GM12878 (cell line): ENCODE measurements at regions of chr6 and their contacts with region 1.

Region 1: DNA sequence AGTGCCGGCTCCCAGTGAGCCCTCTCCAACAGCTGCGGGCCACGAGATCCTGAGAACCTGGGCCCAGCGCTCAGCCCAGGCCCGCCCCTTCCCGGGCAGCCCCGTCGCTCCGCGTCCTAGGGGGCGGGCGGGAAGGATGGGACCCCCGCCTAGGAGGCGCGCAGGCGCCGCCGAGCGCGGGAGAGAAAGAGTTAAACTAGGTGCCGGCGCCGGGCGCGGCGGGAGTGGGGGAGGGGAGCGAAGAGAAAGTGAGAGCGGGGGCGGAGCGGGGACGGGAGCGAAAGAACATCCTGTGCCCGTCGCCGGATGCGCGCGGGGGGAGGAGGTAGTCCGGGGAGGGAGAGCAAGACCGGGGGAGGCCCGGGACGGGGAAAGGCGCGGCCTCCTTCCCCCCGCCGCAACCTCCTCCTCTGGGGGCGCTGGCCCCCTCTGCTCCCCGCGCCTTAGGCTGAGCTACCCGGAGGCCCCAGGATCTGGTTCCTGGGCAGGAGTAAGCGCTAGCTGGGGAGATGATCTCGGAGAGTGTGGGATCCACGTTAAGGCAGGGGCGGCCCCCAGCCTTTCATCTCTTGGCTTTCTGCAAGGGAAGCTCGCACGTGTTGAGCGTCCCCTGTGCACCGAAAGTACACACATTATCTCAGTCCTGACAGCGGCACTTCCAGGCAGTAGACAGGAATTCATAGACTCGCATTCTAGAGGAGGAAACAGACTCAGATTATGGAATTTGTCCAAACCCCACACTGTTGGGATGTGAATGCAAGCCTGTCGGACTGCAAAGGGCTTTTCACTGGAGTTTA is 4.9 kb upstream of the ARMC12 start:
- DNase-seq: peak; percentile 67
- ATAC-seq: peak; percentile 70
- H3K4me3 ChIP-seq: peak overlapping the region; percentile 86
- H3K27ac ChIP-seq: peak overlapping the region; percentile 89
- H3K4me1 ChIP-seq: peaks cover 44% of the 10 kb centered on the region
- H3K27me3 ChIP-seq: no peaks in the 10 kb centered on the region
- CTCF ChIP-seq: peak in 2 of 3 experiments; percentile 1 to 22; a peak in 1 of 6 replicates
- EP300 ChIP-seq: peak; percentile 33 to 68; a peak in 1 of 4 replicates
- POLR2A ChIP-seq: peak; percentile 70
- RAD21 ChIP-seq: no peak

Region 2: DNA sequence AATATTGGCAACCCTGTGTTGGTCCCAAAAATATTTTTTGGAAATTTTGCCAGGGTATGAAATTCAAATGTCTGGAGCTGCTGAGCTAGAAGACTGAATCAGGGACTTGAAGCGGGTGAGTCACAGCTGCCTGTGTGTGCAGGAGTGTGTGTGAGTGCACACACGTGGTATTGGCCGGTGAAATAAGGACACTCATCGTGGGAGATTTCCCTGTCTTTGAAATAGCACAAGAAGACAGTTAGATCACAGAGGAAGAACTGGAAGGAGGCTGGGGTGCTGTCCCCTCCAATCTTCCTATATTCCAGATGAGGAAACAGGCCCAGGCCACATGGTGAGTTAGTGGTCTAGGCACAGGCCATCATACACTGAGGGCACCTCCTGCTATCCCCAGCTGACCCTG is 1804.3 kb before region 1 on chr6:
- CTCF ChIA-PET with region 1: no interaction called
- POLR2A ChIA-PET with region 1: no interaction called
- RAD21 ChIA-PET with region 1: no interaction called
- SMC1A ChIA-PET with region 1: no interaction called
- in situ Hi-C with region 1: no loop called
- intact Hi-C with region 1: no loop called
- DNase-seq: no peak
- ATAC-seq: no peak
- H3K4me3 ChIP-seq: no peak overlapping the region
- H3K27ac ChIP-seq: no peak overlapping the region
- H3K4me1 ChIP-seq: no peaks in the 10 kb centered on the region
- H3K27me3 ChIP-seq: peaks cover 0 to 2% of the 10 kb centered on the region in 2 experiments; a peak in 2 of 4 replicates
- CTCF ChIP-seq: no peak
- EP300 ChIP-seq: no peak
- POLR2A ChIP-seq: no peak
- RAD21 ChIP-seq: no peak

Region 3: DNA sequence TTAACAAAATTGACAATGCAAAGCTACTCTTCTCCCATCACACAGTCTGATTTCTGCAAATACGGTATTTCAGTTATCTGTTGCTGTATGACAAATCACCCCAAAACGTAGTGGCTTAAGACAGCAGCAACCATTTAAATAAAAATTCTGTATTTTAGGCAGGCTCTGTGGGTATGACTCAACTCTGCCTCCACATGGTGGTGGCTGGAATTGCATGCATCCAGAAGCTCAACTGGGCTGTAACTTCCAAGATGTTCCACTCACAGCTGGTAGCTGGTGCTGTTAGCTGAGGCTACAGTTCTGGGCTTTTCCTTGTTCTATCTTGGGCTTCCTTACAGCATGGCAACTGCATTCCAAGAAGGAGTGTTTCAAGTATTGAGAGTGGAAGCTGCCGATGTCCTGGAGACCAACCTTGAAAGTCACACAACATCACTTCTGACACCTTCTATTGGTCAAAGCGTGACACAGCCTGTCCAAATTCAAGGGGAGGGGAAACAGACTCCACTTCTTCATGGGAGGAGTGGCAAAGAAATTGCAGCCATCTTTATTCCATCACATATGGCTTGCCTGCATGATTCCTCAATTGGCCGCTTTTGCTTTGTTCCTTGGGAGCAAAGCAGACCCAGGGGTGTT is 179.5 kb before region 1 on chr6:
- CTCF ChIA-PET with region 1: interaction called, 11 read pairs
- POLR2A ChIA-PET with region 1: no interaction called
- RAD21 ChIA-PET with region 1: interaction called, 3 read pairs
- SMC1A ChIA-PET with region 1: interaction called, 4 read pairs
- in situ Hi-C with region 1: no loop called
- intact Hi-C with region 1: no loop called
- DNase-seq: peak; percentile 15
- ATAC-seq: peak; percentile 43; the same call in 2 of the 3 replicates
- H3K4me3 ChIP-seq: no peak overlapping the region
- H3K27ac ChIP-seq: no peak overlapping the region
- H3K4me1 ChIP-seq: no peaks in the 10 kb centered on the region
- H3K27me3 ChIP-seq: no peaks in the 10 kb centered on the region
- CTCF ChIP-seq: peak; percentile 40 to 90 (median 83)
- EP300 ChIP-seq: no peak
- POLR2A ChIP-seq: no peak
- RAD21 ChIP-seq: peak; percentile 39; the same call in 1 of the 2 replicates

Region 4: DNA sequence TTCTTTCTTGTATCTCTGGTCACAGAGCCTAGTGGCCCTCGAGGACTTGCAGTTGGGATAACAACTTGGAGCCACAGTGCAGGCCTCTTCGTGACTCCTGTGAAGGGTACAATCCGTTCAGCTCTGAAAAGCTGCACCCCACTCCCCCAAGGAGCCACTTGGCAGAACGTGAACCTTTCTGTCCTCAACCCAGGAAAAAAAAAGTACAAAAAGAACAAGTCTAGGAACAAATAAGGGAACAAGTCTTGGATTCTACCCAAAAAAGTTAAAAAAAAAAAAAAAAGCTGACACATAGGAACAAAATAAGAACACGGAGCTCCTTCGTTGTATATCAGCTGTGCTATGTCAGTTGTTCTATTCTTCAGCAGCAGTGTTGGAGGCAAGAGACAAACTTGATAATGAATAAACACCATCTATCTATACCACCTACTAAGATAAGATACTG is 141.3 kb before region 1 on chr6:
- CTCF ChIA-PET with region 1: interaction called, 374 read pairs
- POLR2A ChIA-PET with region 1: interaction called, 8 read pairs
- RAD21 ChIA-PET with region 1: interaction called, 91 read pairs
- SMC1A ChIA-PET with region 1: interaction called, 149 read pairs
- in situ Hi-C with region 1: no loop called
- intact Hi-C with region 1: no loop called
- DNase-seq: no peak
- ATAC-seq: no peak
- H3K4me3 ChIP-seq: no peak overlapping the region
- H3K27ac ChIP-seq: no peak overlapping the region
- H3K4me1 ChIP-seq: no peaks in the 10 kb centered on the region
- H3K27me3 ChIP-seq: no peaks in the 10 kb centered on the region
- CTCF ChIP-seq: no peak
- EP300 ChIP-seq: no peak
- POLR2A ChIP-seq: no peak
- RAD21 ChIP-seq: no peak

Region 5: GRCh38 chr6:35629876-35630378 is 102.0 kb before region 1 on chr6:
- CTCF ChIA-PET with region 1: interaction called, 16 read pairs
- POLR2A ChIA-PET with region 1: no interaction called
- RAD21 ChIA-PET with region 1: interaction called, 6 read pairs
- SMC1A ChIA-PET with region 1: interaction called, 5 read pairs
- in situ Hi-C with region 1: no loop called
- intact Hi-C with region 1: no loop called
- DNase-seq: no peak
- ATAC-seq: no peak
- H3K4me3 ChIP-seq: no peak overlapping the region
- H3K27ac ChIP-seq: no peak overlapping the region
- H3K4me1 ChIP-seq: no peaks in the 10 kb centered on the region
- H3K27me3 ChIP-seq: no peaks in the 10 kb centered on the region
- CTCF ChIP-seq: no peak
- EP300 ChIP-seq: no peak
- POLR2A ChIP-seq: no peak
- RAD21 ChIP-seq: no peak

Region 6: DNA sequence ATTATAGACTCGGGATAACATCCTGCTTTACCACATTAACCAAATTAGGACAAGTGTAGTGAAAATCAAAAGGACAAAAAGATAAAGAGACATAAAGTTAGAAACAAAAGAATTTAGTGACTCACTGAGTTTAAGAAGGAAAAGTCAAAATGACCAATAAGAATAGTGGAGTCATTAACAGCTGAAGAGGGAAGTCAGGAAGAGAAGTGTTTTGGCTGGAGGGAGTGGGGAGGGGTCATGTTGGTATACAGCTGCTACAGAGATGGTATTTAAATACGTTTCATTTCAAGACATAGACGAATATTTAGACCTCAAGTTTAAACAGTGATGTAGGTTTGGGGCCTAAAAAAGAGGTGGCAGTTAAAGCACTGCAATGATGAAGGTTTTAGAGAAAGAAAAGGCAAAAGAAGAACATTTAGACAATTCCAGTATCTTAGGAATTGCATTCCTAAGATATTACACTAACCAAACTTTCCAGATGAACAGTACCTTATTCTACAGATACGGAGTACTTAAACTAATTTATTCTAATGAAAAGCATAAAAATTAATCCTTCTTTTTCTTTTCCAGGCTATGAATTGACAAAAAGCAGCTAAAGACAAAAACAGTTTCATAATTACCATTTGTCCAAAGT is 53.8 kb before region 1 on chr6:
- CTCF ChIA-PET with region 1: interaction called, 22 read pairs
- POLR2A ChIA-PET with region 1: interaction called, 4 read pairs
- RAD21 ChIA-PET with region 1: interaction called, 15 read pairs
- SMC1A ChIA-PET with region 1: interaction called, 14 read pairs
- in situ Hi-C with region 1: no loop called
- intact Hi-C with region 1: no loop called
- DNase-seq: no peak
- ATAC-seq: no peak
- H3K4me3 ChIP-seq: no peak overlapping the region
- H3K27ac ChIP-seq: no peak overlapping the region
- H3K4me1 ChIP-seq: peaks cover 6% of the 10 kb centered on the region
- H3K27me3 ChIP-seq: no peaks in the 10 kb centered on the region
- CTCF ChIP-seq: no peak
- EP300 ChIP-seq: no peak
- POLR2A ChIP-seq: no peak
- RAD21 ChIP-seq: no peak

Region 7: GRCh38 chr6:35757456-35758123 is 25.7 kb after region 1 on chr6:
- CTCF ChIA-PET with region 1: interaction called, 10 read pairs
- POLR2A ChIA-PET with region 1: no interaction called
- RAD21 ChIA-PET with region 1: interaction called, 7 read pairs
- SMC1A ChIA-PET with region 1: no interaction called
- in situ Hi-C with region 1: no loop called
- intact Hi-C with region 1: no loop called
- DNase-seq: no peak
- ATAC-seq: peak; percentile 87
- H3K4me3 ChIP-seq: no peak overlapping the region
- H3K27ac ChIP-seq: no peak overlapping the region
- H3K4me1 ChIP-seq: peaks cover 26% of the 10 kb centered on the region
- H3K27me3 ChIP-seq: no peaks in the 10 kb centered on the region
- CTCF ChIP-seq: peak; percentile 38 to 66 (median 46); a peak in 4 of 6 replicates
- EP300 ChIP-seq: no peak
- POLR2A ChIP-seq: no peak
- RAD21 ChIP-seq: peak; percentile 44

Region 8: GRCh38 chr6:35786810-35787209 is 54.9 kb after region 1 on chr6:
- CTCF ChIA-PET with region 1: no interaction called
- POLR2A ChIA-PET with region 1: no interaction called
- RAD21 ChIA-PET with region 1: no interaction called
- SMC1A ChIA-PET with region 1: no interaction called
- in situ Hi-C with region 1: no loop called
- intact Hi-C with region 1: no loop called
- DNase-seq: no peak
- ATAC-seq: no peak
- H3K4me3 ChIP-seq: no peak overlapping the region
- H3K27ac ChIP-seq: no peak overlapping the region
- H3K4me1 ChIP-seq: no peaks in the 10 kb centered on the region
- H3K27me3 ChIP-seq: peaks cover 1 to 4% of the 10 kb centered on the region in 2 experiments
- CTCF ChIP-seq: no peak
- EP300 ChIP-seq: no peak
- POLR2A ChIP-seq: no peak
- RAD21 ChIP-seq: no peak